Astrocyte of the cerebellum (primary cell): ENCODE measurements at regions of chr6 and their contacts with region 1.

Region 1: GRCh38 chr6:164315376-164315775 is 900.9 kb downstream of the QKI start:
- DNase-seq: no peak
- H3K4me3 ChIP-seq: no peak overlapping the region
- CTCF ChIP-seq: no peak

Region 2: DNA sequence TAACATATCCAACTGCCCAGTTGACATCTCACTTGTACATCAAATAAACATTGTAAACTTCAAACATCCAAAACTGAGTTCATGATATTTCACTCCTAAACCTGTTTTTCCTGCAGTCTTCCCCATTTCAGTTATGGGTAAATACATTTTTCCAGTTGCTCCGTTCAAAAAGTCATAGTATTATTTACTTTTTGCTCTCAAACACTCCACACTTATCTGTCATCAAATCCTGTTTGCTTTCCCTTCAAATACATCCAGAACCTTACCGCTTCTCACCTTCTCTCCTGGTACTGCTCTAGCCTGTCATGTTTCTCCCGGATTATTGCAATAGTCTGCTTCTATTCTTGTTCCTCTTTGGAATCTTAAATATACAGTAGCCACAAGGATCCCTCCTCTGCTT is 32.3 kb before region 1 on chr6:
- in situ Hi-C with region 1: loop called (anchors 5 kb)
- DNase-seq: no peak
- H3K4me3 ChIP-seq: no peak overlapping the region
- CTCF ChIP-seq: no peak

Region 3: DNA sequence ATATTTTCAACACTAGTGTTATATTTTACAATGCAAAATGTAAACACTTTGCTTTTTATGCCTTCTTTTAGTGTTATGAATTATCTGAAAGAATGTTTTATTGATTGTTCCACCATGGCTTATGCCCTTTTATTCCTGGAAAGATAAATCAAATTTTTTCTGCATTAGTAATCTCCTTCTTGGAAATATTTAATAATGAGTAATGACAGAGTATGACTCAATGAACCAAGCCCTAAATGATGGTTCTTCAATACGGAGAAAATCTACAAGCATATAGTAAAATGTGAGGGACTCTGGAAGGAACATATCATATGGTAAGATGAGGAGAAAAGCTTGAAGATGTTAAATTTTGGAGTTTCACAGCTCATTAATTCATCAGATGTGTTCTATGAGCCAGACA is 64.4 kb after region 1 on chr6:
- in situ Hi-C with region 1: loop called (anchors 5 kb)
- DNase-seq: no peak
- H3K4me3 ChIP-seq: no peak overlapping the region
- CTCF ChIP-seq: no peak